ENCODE measurements at regions of chr1 and their contacts with region 1.

Region 1: GRCh38 chr1:184222652-184223052 is 164.2 kb upstream of the C1orf21 start:
- DNase-seq: peak; percentile 22
- H3K4me3 Mint-ChIP-seq: no peak overlapping the region
- H3K27ac Mint-ChIP-seq: no peak overlapping the region
- H3K4me1 Mint-ChIP-seq: peaks cover 7% of the 10 kb centered on the region
- H3K27me3 Mint-ChIP-seq: peaks cover 6% of the 10 kb centered on the region

Region 2: GRCh38 chr1:184025242-184025675 is 197.4 kb before region 1 on chr1:
- intact Hi-C with region 1: no loop called
- DNase-seq: no peak
- H3K4me3 Mint-ChIP-seq: no peak overlapping the region
- H3K27ac Mint-ChIP-seq: no peak overlapping the region
- H3K4me1 Mint-ChIP-seq: no peaks in the 10 kb centered on the region
- H3K27me3 Mint-ChIP-seq: peaks cover 30% of the 10 kb centered on the region

Region 3: GRCh38 chr1:184069675-184070074 is 153.0 kb before region 1 on chr1:
- intact Hi-C with region 1: no loop called
- DNase-seq: no peak
- H3K4me3 Mint-ChIP-seq: no peak overlapping the region
- H3K27ac Mint-ChIP-seq: no peak overlapping the region
- H3K4me1 Mint-ChIP-seq: peaks cover 10% of the 10 kb centered on the region
- H3K27me3 Mint-ChIP-seq: no peaks in the 10 kb centered on the region

Region 4: DNA sequence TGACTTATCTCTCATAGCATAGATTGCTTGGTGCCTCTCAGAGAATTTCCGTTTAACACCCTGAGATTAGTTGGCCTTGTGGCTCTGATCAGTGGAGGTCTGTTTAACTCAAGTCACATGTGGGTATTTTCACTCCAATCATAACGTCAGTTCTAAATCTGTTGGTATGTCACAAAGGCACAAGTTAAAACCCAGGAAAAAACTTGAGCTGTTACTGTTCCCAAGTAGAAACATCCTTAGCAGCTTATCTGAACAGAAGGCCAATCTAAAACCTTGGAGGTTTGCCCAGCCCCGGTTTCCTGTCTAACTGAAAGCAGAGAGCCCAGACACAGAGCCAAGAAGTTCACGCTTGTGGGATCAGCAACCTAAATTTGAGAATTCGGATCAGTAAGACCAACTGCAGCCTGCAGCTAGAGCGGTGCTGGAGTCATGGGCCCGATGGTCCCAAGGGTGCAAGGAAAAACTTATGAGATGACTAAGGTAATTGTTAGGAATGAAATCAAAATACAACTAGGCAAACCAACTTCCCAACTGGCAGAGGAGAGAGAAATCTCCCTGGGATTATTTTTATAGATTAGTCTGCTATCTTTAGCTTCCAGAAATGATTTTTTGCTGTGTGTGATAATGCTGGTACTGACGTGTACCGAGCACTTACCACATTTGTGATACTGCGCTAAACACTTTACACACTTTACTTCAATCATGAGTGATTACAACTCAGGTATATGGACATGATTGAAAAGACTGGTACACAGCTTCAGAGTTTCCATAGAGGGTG is 74.0 kb after region 1 on chr1:
- intact Hi-C with region 1: no loop called
- DNase-seq: no peak
- H3K4me3 Mint-ChIP-seq: no peak overlapping the region
- H3K27ac Mint-ChIP-seq: no peak overlapping the region
- H3K4me1 Mint-ChIP-seq: no peaks in the 10 kb centered on the region
- H3K27me3 Mint-ChIP-seq: peaks cover 8% of the 10 kb centered on the region

Region 5: DNA sequence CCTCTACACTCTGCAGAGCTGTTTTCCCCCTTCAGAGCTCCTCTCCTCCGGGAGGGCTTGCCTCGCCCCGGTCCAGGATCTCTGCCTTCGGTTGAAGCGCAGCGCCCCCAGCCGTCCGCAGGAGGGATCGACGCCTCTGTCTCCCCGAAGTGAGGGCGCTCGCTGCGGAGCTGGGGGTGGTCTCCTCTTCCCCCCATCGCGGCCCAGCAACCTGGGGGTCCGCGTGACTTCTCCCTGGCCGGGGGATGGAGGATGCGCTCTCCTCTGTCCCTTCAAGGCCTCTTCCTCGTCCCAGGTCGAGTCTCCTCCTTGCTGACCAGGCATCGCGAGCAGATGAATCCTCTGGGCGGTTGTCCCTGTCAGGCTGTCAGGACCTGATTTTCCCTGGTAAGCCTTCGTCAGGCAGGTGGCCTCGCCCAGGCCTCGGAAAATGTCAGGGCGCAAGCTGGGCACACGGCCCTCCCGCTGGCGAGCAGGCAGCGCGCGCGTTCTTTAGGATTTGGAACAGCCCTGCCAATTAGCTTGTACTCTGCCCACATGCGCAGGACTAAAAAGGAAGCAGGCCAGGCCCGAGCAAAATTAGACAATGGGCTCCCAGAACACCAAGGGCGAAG is 441.5 kb after region 1 on chr1:
- intact Hi-C with region 1: loop called (anchors 10 kb)
- DNase-seq: peak; percentile 13
- H3K4me3 Mint-ChIP-seq: no peak overlapping the region
- H3K27ac Mint-ChIP-seq: no peak overlapping the region
- H3K4me1 Mint-ChIP-seq: no peaks in the 10 kb centered on the region
- H3K27me3 Mint-ChIP-seq: peaks cover 18% of the 10 kb centered on the region

Measured in activated T-helper 1 cell treated with anti-CD3 and anti-CD28 coated beads, Interleukin-12 subunit alpha, Interleukin-12 subunit beta, Interleukin-2, Interleukin-4 antibody, amounts not matched to agents 30 ng/mL and 10 ng/mL and 1 ng/mL, durations not matched to agents 14 hours and 24 hours and 36 hours (primary cell).